CD14-positive monocyte (primary cell): ENCODE measurements at regions of chr17 and their contacts with region 1.

Region 1: DNA sequence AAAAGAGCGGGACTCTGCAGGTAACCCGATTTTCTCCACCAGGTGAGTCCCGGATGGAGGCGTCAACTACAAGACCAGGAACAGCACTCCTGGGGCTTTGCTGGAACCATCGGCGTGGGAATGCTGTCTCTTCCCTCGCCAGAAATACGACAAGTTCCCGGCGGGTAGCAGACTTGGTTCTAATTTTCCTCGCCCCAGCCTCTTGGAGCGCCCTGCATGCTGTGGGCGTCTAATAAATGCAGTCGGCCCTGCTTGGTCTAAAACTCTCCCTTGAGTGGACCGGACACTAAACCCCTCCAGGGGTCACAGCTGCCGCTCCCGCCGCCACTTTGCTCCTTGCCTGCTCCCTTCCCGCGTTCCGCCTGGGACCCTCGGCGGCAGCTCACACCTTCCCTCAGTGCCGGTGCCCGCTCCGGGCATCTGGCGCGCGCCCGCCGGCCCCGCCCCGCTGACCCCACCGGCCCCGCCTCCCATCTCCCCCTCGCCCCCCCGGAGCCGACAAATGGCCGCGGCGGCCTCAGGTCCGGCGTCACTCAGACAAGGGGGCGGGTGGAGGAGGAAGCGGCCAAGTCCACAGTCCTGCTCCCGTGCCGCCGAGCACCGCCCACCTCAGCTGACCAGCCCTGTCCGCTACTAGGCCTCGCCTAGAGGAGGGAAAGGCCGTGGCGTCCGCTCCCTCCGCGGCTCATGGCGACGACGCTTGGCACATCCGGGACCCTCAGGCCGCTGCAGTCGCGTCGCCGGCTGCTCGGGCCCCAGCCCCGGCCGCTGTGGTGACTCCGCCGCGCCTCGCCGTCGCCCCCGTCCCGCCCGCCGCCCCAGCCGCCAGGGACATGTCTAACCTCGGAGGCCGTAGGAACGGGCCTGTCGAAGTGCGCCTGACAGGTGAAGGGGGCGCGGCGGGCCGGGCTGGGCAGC is 65.8 kb downstream of the KPNA2 start:
- DNase-seq: peak; percentile 87 to 94 (median 94)
- H3K4me3 ChIP-seq: peak overlapping the region; percentile 49 to 82 (median 65)
- H3K4me3 Mint-ChIP-seq: peak overlapping the region; percentile 95 to 97
- H3K27ac ChIP-seq: peak overlapping the region in 1 of 2 donors; percentile 92
- H3K27ac Mint-ChIP-seq: peak overlapping the region; percentile 85 to 96 (median 92)
- H3K4me1 ChIP-seq: peaks cover 13 to 25% of the 10 kb centered on the region in 2 donors
- H3K4me1 Mint-ChIP-seq: peaks cover 28% of the 10 kb centered on the region
- H3K27me3 ChIP-seq: no peaks in the 10 kb centered on the region
- H3K27me3 Mint-ChIP-seq: peaks cover 0 to 4% (median 0%) of the 10 kb centered on the region in 3 donors
- CTCF ChIP-seq: no peak

Region 2: GRCh38 chr17:68035523-68036303 is 65.6 kb before region 1 on chr17 and contains the start of gene KPNA2:
- intact Hi-C with region 1: loop called in 1 of 2 experiments (anchors 10 kb)
- DNase-seq: peak; percentile 95 to 96 (median 96)
- H3K4me3 ChIP-seq: peak within 1 kb of the TSS; percentile 70 to 99 (median 98)
- H3K4me3 Mint-ChIP-seq: peak within 1 kb of the TSS; percentile 94 to 97
- H3K27ac ChIP-seq: peak within 1 kb of the TSS; percentile 80 to 83
- H3K27ac Mint-ChIP-seq: peak within 1 kb of the TSS; percentile 85 to 95 (median 91)
- H3K4me1 ChIP-seq: peaks cover 16 to 24% of the 10 kb centered on the region in 2 donors
- H3K4me1 Mint-ChIP-seq: peaks cover 15% of the 10 kb centered on the region
- H3K27me3 ChIP-seq: no peaks in the 10 kb centered on the region
- H3K27me3 Mint-ChIP-seq: peaks cover 1 to 2% (median 1%) of the 10 kb centered on the region in 3 donors
- CTCF ChIP-seq: no peak
- polyA plus RNA-seq, gene KPNA2: 23.2 to 36.1 (median 23.2) TPM